ENCODE measurements at regions of chr17 and their contacts with region 1.

Region 1: DNA sequence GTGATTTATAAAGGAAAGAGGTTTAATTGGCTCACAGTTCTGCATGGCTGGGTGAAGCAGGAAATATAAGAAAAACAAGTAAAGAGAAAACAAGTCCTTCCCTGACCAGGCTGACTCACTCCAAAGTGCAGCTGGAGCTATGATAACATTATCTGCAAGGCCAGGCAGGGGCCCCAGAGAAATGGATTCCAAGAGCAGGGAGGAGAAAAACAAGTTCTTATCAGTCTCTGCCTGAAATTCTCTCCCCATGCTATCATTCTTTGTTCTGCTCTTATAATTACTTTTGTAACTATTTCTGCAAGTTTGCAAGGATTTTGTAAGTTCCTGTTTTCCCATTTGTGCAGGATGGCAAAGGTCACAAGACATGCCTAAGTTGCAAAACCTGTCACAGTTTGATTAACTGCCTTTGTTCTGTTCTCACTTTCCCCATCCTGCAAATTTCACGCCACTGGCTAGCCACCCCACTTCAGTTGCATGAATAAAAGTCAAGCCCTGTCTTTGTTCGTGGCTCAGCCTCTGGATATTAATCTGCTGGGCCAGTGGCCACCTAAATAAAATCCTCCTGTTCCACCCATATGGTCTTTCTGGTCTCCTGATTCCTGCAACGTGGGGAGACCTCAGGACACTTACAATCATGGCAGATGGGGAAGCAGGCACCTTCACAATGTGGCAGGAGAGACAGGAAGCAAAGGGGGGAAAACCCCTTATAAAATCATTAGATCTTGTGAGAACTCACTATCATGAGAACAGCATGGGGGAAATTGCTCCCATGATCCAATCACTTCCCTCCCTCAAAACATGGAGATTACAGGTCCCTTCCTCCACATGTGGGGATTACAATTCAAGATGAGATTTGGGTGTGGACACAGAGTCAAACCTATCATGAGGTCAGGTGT is 13.1 kb downstream of the ABCA9 start:
- DNase-seq: peak; percentile 68 to 94 (median 74)
- ATAC-seq: peak; percentile 94
- H3K4me3 ChIP-seq: no peak overlapping the region
- H3K27ac ChIP-seq: peak overlapping the region; percentile 86
- H3K4me1 ChIP-seq: peaks cover 3 to 31% of the 10 kb centered on the region in 2 experiments
- H3K27me3 ChIP-seq: no peaks in the 10 kb centered on the region
- CTCF ChIP-seq: no peak
- EP300 ChIP-seq: peak; percentile 99
- POLR2A ChIP-seq: no peak
- RAD21 ChIP-seq: peak in 1 of 2 experiments; percentile 34; a peak in 2 of 4 replicates

Region 2: GRCh38 chr17:69093279-69093789 is 45.7 kb after region 1 on chr17:
- CTCF ChIA-PET with region 1: no interaction called
- POLR2A ChIA-PET with region 1: no interaction called
- in situ Hi-C with region 1: no loop called
- intact Hi-C with region 1: loop called (anchors 2 kb)
- DNase-seq: peak; percentile 32 to 89 (median 54)
- ATAC-seq: peak; percentile 87
- H3K4me3 ChIP-seq: no peak overlapping the region
- H3K27ac ChIP-seq: peak overlapping the region; percentile 95
- H3K4me1 ChIP-seq: peaks cover 3 to 30% of the 10 kb centered on the region in 2 experiments; a peak in 4 of 5 replicates
- H3K27me3 ChIP-seq: no peaks in the 10 kb centered on the region
- CTCF ChIP-seq: no peak
- EP300 ChIP-seq: peak; percentile 98
- POLR2A ChIP-seq: peak; percentile 62; the same call in 1 of the 2 replicates
- RAD21 ChIP-seq: peak; percentile 18 to 43; a peak in 3 of 4 replicates